B cell (primary cell): ENCODE measurements at regions of chr6 and their contacts with region 1.

Region 1: GRCh38 chr6:167130008-167130677 is 7.2 kb downstream of the CCR6 start:
- DNase-seq: peak; percentile 70
- ATAC-seq: peak; percentile 26
- H3K4me3 ChIP-seq: peak overlapping the region in 1 of 5 experiments; percentile 21
- H3K4me3 Mint-ChIP-seq: peak overlapping the region; percentile 53
- H3K27ac ChIP-seq: peak overlapping the region; percentile 82 to 92
- H3K27ac Mint-ChIP-seq: peak overlapping the region; percentile 100
- H3K4me1 ChIP-seq: peaks cover 78 to 82% of the 10 kb centered on the region in 2 donors
- H3K4me1 Mint-ChIP-seq: peaks cover 88% of the 10 kb centered on the region
- H3K27me3 ChIP-seq: no peaks in the 10 kb centered on the region
- H3K27me3 Mint-ChIP-seq: no peaks in the 10 kb centered on the region
- CTCF ChIP-seq: no peak

Region 2: DNA sequence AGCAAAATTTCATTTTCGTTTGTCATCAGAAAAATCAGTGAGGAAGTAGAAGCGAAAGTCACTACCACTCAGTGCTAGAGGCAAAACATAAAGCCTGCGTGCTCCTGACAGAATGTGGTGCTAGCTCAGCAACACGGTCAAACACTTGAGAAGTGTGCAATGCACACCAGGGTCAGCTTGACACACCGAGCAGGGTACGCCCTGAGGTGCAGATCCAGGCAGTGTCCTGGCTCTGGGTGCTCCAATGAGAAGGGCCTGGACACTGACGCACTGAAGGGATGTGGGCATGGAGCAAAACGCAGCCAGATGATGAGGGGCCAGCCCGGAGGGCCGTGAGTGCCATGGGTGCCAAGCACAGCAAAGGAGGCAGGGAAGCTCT is 179.7 kb before region 1 on chr6:
- CTCF ChIA-PET with region 1: no interaction called
- POLR2A ChIA-PET with region 1: interaction called, 12 read pairs
- intact Hi-C with region 1: loop called (anchors 2 kb)
- DNase-seq: peak; percentile 76
- ATAC-seq: peak; percentile 22
- H3K4me3 ChIP-seq: peak overlapping the region; percentile 1 to 60 (median 24)
- H3K4me3 Mint-ChIP-seq: peak overlapping the region; percentile 94
- H3K27ac ChIP-seq: peak overlapping the region; percentile 82 to 94
- H3K27ac Mint-ChIP-seq: peak overlapping the region; percentile 98
- H3K4me1 ChIP-seq: peaks cover 62 to 69% of the 10 kb centered on the region in 2 donors
- H3K4me1 Mint-ChIP-seq: peaks cover 60% of the 10 kb centered on the region
- H3K27me3 ChIP-seq: no peaks in the 10 kb centered on the region
- H3K27me3 Mint-ChIP-seq: no peaks in the 10 kb centered on the region
- CTCF ChIP-seq: no peak

Region 3: DNA sequence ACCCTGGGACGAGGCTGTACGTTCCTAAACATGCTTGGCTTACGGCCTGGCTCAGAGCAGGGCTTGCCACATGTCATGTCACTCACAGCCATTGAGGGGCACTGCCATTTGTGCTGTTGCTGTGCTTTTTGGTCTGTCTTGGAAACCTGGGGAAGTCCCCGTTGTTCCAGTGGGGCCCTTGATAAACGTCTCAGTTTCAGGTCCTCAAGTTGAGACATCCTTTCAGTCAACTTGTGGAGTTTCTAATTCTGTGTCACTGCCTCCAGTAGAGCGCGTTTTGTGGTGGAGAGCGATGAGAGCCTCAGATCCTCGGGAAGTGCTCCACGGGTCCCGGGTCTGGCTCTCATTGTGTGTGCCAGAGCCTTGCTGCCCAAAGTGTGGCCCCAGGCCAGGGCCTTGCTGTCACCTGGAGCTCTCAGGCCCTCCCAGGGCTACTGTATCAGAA is 50.3 kb before region 1 on chr6:
- CTCF ChIA-PET with region 1: interaction called, 3 read pairs
- POLR2A ChIA-PET with region 1: no interaction called
- intact Hi-C with region 1: loop called (anchors 2 kb)
- DNase-seq: peak; percentile 93
- ATAC-seq: peak; percentile 99
- H3K4me3 ChIP-seq: peak overlapping the region in 1 of 5 experiments; percentile 48
- H3K4me3 Mint-ChIP-seq: peak overlapping the region; percentile 51
- H3K27ac ChIP-seq: peak overlapping the region; percentile 74 to 87
- H3K27ac Mint-ChIP-seq: peak overlapping the region; percentile 93
- H3K4me1 ChIP-seq: peaks cover 39 to 46% of the 10 kb centered on the region in 2 donors
- H3K4me1 Mint-ChIP-seq: peaks cover 36% of the 10 kb centered on the region
- H3K27me3 ChIP-seq: no peaks in the 10 kb centered on the region
- H3K27me3 Mint-ChIP-seq: no peaks in the 10 kb centered on the region
- CTCF ChIP-seq: peak; percentile 79

Region 4: GRCh38 chr6:167087857-167088354 is 42.2 kb before region 1 on chr6:
- CTCF ChIA-PET with region 1: interaction called, 168 read pairs
- POLR2A ChIA-PET with region 1: interaction called, 432 read pairs
- intact Hi-C with region 1: loop called (anchors 1 kb)
- DNase-seq: no peak
- ATAC-seq: no peak
- H3K4me3 ChIP-seq: no peak overlapping the region
- H3K4me3 Mint-ChIP-seq: no peak overlapping the region
- H3K27ac ChIP-seq: no peak overlapping the region
- H3K27ac Mint-ChIP-seq: no peak overlapping the region
- H3K4me1 ChIP-seq: peaks cover 44 to 46% of the 10 kb centered on the region in 2 donors
- H3K4me1 Mint-ChIP-seq: peaks cover 50% of the 10 kb centered on the region
- H3K27me3 ChIP-seq: no peaks in the 10 kb centered on the region
- H3K27me3 Mint-ChIP-seq: no peaks in the 10 kb centered on the region
- CTCF ChIP-seq: no peak

Region 5: DNA sequence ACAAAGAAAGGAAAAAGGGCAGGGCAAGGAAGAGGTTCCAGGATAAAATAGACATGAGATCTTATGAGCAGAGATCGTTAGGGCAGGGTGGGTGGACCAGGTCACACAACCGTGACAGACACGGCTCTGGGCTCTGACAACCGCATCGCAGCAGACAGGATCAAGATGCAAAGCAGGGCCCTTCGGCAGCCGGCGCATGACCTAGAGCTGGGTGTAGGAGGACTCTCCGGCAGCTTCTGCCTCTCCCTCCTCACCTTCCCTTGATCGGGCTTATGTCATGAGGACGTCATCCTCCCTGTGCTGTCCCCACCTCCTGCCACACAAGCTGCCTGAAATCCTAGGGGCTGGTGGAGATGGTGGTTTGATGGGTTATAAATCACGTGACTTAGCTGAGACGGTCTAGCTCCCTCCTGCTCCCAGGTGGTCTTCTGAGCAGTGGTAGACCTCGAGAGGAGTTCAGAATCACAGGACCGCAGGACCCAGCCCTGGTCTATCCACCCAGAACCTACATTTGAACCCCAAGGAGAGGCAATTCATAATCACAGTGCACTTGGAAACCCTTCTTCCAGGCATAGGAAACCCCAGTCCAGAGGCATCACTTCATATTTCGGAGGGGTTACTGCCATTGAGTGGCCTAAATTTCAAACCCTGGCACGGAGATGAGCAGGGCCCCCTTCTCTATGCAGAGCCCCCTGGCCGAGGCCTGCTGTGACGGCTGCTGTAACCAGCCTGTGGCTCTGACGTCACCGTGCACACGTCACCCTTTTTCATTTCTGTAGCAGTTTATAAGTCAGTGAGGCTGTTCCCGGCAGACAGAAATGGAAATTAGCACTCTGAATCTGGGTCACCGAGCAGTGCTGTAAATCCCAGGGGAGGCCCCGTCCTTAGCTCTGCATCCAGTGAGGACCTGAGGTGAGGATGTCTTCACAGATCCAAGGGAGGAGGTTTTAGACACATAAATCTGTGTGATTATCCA is 15.9 kb before region 1 on chr6:
- CTCF ChIA-PET with region 1: interaction called, 437 read pairs
- POLR2A ChIA-PET with region 1: interaction called, 57 read pairs
- intact Hi-C with region 1: loop called (anchors 1 kb)
- DNase-seq: peak; percentile 98
- ATAC-seq: peak; percentile 78
- H3K4me3 ChIP-seq: peak overlapping the region; percentile 46 to 77 (median 61)
- H3K4me3 Mint-ChIP-seq: peak overlapping the region; percentile 84
- H3K27ac ChIP-seq: peak overlapping the region; percentile 98 to 100
- H3K27ac Mint-ChIP-seq: peak overlapping the region; percentile 96
- H3K4me1 ChIP-seq: peaks cover 85 to 94% of the 10 kb centered on the region in 2 donors
- H3K4me1 Mint-ChIP-seq: peaks cover 94% of the 10 kb centered on the region
- H3K27me3 ChIP-seq: no peaks in the 10 kb centered on the region
- H3K27me3 Mint-ChIP-seq: no peaks in the 10 kb centered on the region
- CTCF ChIP-seq: no peak

Region 6: DNA sequence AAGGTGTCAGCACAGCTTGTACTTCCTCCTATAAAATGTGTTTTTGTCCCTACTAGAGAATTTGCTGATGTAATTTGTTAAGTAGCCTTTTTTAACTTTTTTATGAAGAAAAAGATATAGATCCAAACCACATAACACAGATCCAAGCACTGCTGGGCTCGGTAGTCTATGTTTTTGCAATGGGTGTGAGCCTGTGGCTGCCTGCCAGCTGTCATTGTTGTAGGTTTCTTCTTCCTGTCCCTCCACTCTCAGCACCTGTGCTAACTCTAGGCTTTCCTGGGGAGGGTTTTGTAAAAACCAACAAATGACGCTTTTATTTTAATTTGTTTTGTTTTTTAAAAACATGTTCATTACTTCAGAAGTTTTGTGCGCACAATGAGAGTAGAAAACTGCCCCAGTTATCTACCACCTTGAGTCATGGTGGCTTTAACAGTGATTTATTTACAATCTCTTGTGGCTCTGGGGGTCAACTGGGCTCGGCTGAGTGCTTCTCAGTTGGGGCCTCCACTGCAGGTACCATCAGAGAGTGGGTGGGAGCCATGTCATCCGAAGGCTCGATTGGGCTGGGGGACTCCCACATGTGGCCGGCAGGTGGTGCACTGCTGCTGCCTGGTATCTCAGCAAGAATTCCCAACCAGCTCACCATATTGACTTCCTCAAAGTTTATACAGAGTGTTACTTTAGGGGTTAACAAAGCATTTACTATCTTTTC is 10.3 kb before region 1 on chr6:
- CTCF ChIA-PET with region 1: interaction called, 437 read pairs
- POLR2A ChIA-PET with region 1: interaction called, 57 read pairs
- intact Hi-C with region 1: loop called (anchors 1 kb)
- DNase-seq: peak; percentile 65
- ATAC-seq: no peak
- H3K4me3 ChIP-seq: peak overlapping the region; percentile 2 to 88 (median 15)
- H3K4me3 Mint-ChIP-seq: peak overlapping the region; percentile 96
- H3K27ac ChIP-seq: peak overlapping the region; percentile 97 to 98
- H3K27ac Mint-ChIP-seq: peak overlapping the region; percentile 100
- H3K4me1 ChIP-seq: peaks cover 71 to 84% of the 10 kb centered on the region in 2 donors
- H3K4me1 Mint-ChIP-seq: peaks cover 85% of the 10 kb centered on the region
- H3K27me3 ChIP-seq: no peaks in the 10 kb centered on the region
- H3K27me3 Mint-ChIP-seq: no peaks in the 10 kb centered on the region
- CTCF ChIP-seq: peak; percentile 41

Region 7: DNA sequence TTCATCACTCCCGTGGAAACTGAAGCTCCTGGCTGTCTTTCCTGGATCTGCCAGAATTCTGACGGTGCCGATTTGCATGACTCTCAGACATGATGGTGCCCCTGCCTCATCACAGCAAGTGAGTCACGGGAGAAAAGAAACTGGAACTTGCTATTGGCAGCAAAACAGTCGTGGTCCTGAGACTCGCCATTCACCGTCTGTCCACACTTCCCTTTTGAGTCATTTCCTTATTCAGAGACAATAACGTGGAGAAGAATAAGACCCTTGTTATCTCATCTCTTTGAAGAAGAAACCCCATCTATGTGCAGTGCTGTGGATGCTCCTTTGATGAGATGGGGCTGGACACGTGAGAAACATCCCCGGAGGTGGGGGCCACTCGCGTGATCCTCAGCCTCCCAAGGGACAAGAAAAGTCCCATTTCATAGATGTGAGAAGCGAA is 23.4 kb after region 1 on chr6:
- CTCF ChIA-PET with region 1: no interaction called
- POLR2A ChIA-PET with region 1: interaction called, 4 read pairs
- intact Hi-C with region 1: loop called (anchors 2 kb)
- DNase-seq: peak; percentile 77
- ATAC-seq: peak; percentile 65
- H3K4me3 ChIP-seq: peak overlapping the region in 4 of 5 experiments; percentile 15 to 52 (median 37)
- H3K4me3 Mint-ChIP-seq: peak overlapping the region; percentile 86
- H3K27ac ChIP-seq: peak overlapping the region; percentile 72 to 83
- H3K27ac Mint-ChIP-seq: peak overlapping the region; percentile 89
- H3K4me1 ChIP-seq: peaks cover 44 to 55% of the 10 kb centered on the region in 2 donors
- H3K4me1 Mint-ChIP-seq: peaks cover 60% of the 10 kb centered on the region
- H3K27me3 ChIP-seq: no peaks in the 10 kb centered on the region
- H3K27me3 Mint-ChIP-seq: no peaks in the 10 kb centered on the region
- CTCF ChIP-seq: no peak